ENCODE measurements at regions of chrX and their contacts with region 1.

Region 1: GRCh38 chrX:39242187-39242586 is 440.9 kb downstream of the MID1IP1 start:
- DNase-seq: peak; percentile 17 to 18
- ATAC-seq: peak; percentile 81 to 91
- H3K4me3 ChIP-seq: no peak overlapping the region
- H3K27ac ChIP-seq: no peak overlapping the region
- H3K4me1 ChIP-seq: no peaks in the 10 kb centered on the region
- H3K27me3 ChIP-seq: no peaks in the 10 kb centered on the region
- CTCF ChIP-seq: peak; percentile 21 to 57 (median 46)
- POLR2A ChIP-seq: no peak

Region 2: DNA sequence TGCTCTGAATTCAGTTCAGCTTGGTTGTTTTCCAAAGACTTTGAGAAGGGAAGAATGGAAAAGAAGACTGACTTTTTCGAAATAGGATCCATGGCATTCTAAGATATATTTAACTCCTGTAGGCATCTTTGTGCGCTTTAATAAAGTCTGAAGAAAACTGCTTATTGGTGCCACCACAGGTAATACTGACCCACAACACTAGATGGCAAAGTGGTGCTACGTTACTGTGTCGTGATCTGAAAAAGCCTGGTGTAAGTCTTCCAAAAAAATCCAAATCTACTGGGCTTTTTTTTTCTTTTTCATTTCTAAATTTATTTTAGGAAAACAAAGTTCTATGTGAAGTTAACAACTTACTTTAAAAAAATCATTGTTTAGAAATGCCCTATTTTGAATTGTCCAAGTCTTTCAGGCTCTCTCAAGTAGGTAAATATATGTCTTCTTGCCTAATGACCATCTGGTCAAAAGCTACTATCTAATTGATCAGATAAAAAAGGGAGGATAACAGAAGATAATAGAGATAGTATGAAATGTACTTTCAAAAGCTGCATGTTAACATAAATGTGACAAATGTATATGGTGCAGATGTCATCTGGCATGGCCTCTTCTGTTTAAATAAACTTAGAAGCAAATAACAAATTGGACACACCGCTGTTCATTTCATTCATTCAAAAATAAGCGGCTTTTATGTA is 487.9 kb before region 1 on chrX:
- in situ Hi-C with region 1: loop called in 2 of 4 experiments (anchors 5 to 10 kb)
- intact Hi-C with region 1: loop called (anchors 5 kb)
- DNase-seq: peak in 1 of 2 donors; percentile 12
- ATAC-seq: peak in 1 of 2 donors; percentile 64
- H3K4me3 ChIP-seq: no peak overlapping the region
- H3K27ac ChIP-seq: no peak overlapping the region
- H3K4me1 ChIP-seq: no peaks in the 10 kb centered on the region
- H3K27me3 ChIP-seq: no peaks in the 10 kb centered on the region
- CTCF ChIP-seq: peak; percentile 40 to 66 (median 53)
- POLR2A ChIP-seq: no peak

Region 3: DNA sequence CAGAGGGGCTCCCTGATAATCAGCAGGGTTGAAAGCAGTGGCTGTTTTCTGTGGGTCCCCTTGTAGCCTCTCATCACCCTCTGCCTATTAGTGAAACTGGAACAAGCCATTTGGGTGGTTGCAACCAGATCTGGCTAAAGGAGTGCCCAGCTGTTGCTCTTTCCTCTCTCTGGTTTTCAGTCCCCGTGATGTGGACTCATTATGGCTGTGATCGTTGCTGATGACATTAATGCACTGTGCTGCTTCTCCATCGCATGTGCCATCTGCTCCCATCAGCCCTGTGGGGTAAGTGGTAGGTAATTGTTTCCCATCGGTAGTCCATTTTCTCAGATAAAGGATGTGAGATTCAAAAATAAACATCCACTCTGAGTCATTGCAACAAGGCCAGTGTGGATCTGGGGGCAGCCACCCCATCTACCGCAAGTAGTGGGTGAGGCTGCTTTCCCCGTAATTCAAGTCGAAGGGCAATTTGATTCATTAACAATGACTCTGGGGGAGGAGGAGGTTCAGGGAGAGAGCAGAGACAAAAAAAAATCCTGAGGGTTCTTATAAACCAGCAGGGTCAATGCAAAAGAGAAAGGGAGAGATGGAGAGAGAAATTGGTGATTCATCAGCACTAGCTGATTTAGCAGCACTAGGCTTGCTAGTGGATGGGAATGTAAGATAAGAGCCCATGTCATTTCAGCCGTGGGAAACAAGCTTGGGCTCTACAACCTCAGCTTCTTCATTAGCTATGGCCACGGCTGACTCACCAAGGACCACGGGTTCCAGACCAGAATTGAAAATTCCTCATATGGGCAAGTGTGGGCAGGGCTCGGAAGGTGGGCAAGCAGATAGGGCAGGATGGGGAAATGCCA is 83.2 kb before region 1 on chrX:
- in situ Hi-C with region 1: no loop called
- intact Hi-C with region 1: loop called (anchors 5 kb)
- DNase-seq: no peak
- ATAC-seq: no peak
- H3K4me3 ChIP-seq: no peak overlapping the region
- H3K27ac ChIP-seq: no peak overlapping the region
- H3K4me1 ChIP-seq: no peaks in the 10 kb centered on the region
- H3K27me3 ChIP-seq: peaks cover 0 to 6% (median 0%) of the 10 kb centered on the region in 3 donors
- CTCF ChIP-seq: no peak
- POLR2A ChIP-seq: no peak

Region 4: DNA sequence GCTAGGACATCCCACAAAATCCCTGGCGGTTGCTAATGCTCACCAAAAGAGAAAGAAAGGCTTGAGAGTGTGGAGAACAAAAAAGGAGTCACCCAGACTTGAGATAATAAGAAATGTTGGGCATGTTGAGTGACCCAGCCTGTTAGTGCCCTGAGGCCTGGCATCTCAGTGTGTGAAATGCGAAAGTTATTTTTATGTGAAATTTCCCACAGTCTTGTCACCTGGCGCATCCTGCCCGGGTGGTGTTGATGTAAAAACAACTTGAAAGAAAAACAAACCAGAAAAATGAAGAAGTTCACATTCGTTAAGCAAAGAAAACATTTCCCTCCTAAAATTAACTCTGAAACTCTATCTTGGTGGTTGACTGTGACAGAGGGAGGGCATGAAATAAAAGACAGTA is 54.3 kb after region 1 on chrX:
- in situ Hi-C with region 1: no loop called
- intact Hi-C with region 1: no loop called
- DNase-seq: no peak
- ATAC-seq: no peak
- H3K4me3 ChIP-seq: no peak overlapping the region
- H3K27ac ChIP-seq: no peak overlapping the region
- H3K4me1 ChIP-seq: no peaks in the 10 kb centered on the region
- H3K27me3 ChIP-seq: peaks cover 0 to 5% (median 0%) of the 10 kb centered on the region in 3 donors
- CTCF ChIP-seq: no peak
- POLR2A ChIP-seq: no peak

Measured in gastrocnemius medialis (tissue), 4 donors.